AG04449 (cell line): ENCODE measurements at regions of chr20 and their contacts with region 1.

Region 1: GRCh38 chr20:8722276-8722928 is 346.5 kb upstream of the PLCB4 start:
- DNase-seq: no peak
- H3K4me3 ChIP-seq: no peak overlapping the region
- CTCF ChIP-seq: peak; percentile 64

Region 2: DNA sequence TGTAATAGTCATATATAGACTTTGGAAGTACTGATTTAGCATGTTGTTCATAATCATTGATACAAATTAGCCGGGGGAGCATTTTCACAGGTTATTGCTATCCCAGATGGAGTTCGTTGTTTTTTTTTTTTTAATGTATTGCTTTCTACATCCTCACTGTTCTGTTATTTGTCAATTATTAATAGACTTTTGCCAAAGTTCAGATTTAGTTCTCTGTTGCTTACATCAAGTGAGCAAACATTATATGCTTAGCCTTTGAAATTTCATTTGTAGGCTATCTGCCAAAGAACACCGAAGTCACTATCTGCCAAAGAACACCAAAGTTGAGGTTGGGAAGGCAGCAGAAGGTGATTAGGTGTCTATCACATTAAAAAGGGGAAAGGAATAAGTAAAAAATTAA is 782.1 kb before region 1 on chr20 and contains the start of gene HAO1:
- CTCF ChIA-PET with region 1: interaction called, 290 read pairs
- POLR2A ChIA-PET with region 1: no interaction called
- DNase-seq: no peak
- H3K4me3 ChIP-seq: no peak within 1 kb of the TSS
- CTCF ChIP-seq: no peak

Region 3: DNA sequence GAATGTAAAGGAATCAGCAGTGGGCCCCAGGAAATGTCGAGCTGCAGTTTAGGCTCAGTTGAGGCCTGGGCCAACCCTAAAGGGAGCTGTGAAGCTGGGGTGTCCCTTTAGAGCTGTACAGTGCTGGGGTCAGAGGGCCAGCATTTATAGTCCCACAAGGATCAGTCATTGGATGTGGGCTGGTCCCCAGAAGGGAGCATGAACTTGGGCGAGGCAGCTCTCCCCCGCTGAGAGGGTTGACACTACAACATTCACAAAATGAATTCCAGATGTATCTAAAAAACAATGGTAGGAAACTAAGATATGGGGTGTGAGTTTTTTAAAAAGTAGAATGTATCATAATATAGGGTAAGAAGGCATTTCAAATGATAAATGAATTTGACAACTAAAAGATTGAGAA is 673.1 kb before region 1 on chr20:
- CTCF ChIA-PET with region 1: interaction called, 315 read pairs
- POLR2A ChIA-PET with region 1: no interaction called
- DNase-seq: no peak
- H3K4me3 ChIP-seq: no peak overlapping the region
- CTCF ChIP-seq: no peak

Region 4: GRCh38 chr20:8153281-8153908 is 569.0 kb before region 1 on chr20:
- CTCF ChIA-PET with region 1: interaction called, 14 read pairs
- POLR2A ChIA-PET with region 1: no interaction called
- DNase-seq: no peak
- H3K4me3 ChIP-seq: no peak overlapping the region
- CTCF ChIP-seq: no peak

Region 5: GRCh38 chr20:8404912-8405635 is 317.3 kb before region 1 on chr20:
- CTCF ChIA-PET with region 1: interaction called, 22 read pairs
- POLR2A ChIA-PET with region 1: no interaction called
- DNase-seq: no peak
- H3K4me3 ChIP-seq: no peak overlapping the region
- CTCF ChIP-seq: no peak

Region 6: DNA sequence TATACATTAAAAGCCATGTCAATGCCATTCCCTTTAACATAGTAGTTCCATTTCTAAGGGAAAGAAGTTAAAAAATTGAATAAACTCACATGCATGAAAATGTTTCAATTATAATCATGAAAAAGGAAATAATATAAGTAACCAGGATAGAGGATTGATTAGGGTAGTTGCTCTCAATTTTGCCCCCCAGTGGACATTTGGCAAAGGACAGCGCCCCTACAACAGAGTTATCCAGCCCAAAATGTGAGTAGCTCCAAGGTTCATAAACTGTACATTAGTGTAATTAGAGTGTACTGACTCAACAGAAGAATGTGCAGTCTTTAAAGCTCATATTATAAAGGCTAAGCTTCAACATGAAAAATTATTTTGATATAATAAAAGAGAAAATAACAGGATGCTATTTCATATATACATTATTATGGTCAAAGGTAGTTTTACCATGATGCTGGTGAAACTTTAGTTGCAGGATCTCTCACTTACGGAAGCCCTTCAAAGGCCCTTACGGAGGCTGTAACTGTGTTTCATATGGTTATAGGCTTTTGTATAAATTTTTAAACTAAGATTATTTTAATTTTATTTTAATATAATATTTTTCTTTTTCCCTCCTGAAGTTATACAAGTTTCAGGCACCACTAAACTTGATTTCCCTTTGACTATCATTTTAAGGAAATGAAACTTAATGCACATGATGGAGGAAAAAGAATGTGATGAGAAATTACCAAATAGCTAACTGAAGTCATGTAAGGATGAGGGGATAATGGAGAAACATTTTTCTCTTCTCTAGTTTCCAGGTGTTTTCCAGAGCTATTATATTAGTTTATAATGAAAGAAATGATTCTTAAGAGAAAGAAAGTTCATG is 186.8 kb before region 1 on chr20:
- CTCF ChIA-PET with region 1: interaction called, 22 read pairs
- POLR2A ChIA-PET with region 1: no interaction called
- DNase-seq: no peak
- H3K4me3 ChIP-seq: no peak overlapping the region
- CTCF ChIP-seq: peak; percentile 47

Region 7: GRCh38 chr20:8735674-8736073 is 13.3 kb after region 1 on chr20:
- CTCF ChIA-PET with region 1: interaction called, 27 read pairs
- POLR2A ChIA-PET with region 1: no interaction called
- DNase-seq: no peak
- H3K4me3 ChIP-seq: no peak overlapping the region
- CTCF ChIP-seq: no peak

Region 8: DNA sequence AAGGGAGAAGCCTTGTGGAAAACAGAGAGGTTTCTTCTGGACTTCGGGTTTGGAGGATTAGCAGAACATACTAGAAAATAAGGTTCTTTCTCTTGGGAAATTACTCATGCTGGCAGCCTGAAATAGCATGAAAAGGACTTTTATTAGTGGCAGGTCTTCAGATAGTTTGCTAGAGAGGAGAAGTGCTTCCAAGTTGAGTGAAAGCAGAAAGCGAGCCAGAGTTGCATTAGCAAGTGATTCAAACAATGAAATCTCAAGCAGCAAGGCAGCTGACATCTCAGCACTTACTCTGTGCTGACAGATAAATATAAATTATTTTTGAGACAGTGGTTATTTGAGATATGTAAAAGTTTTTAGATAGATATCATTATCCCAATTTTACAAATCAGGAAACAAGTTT is 438.4 kb after region 1 on chr20:
- CTCF ChIA-PET with region 1: no interaction called
- POLR2A ChIA-PET with region 1: no interaction called
- DNase-seq: no peak
- H3K4me3 ChIP-seq: no peak overlapping the region
- CTCF ChIP-seq: no peak